Breast epithelium (tissue), 4 donors: ENCODE measurements at regions of chr3 and their contacts with region 1.

Region 1: GRCh38 chr3:162597226-162597625 is 1100.6 kb downstream of the OTOL1 start:
- DNase-seq: no peak
- H3K4me3 ChIP-seq: no peak overlapping the region
- H3K27ac ChIP-seq: no peak overlapping the region
- H3K4me1 ChIP-seq: no peaks in the 10 kb centered on the region
- H3K27me3 ChIP-seq: no peaks in the 10 kb centered on the region
- CTCF ChIP-seq: no peak
- POLR2A ChIP-seq: no peak

Region 2: DNA sequence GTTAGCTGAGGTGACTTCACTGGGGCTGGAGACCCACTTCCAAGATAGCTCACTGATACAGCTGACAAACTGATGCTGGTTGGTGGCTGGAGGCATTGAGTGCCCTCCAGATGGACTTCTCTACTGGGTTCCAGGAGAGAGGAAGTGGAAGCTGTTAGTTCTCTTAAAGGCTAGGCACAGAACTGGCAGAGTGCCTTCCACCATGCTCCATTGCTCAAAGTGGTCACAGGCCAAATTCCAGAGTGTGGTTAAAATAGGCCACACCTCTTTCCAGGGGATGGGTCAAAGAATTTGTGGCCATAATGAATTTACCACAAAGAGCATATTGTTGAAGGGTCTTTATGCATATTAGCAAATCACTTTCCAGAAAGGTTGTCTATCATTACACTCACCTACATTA is 1301.9 kb before region 1 on chr3:
- intact Hi-C with region 1: loop called (anchors 10 kb)
- DNase-seq: no peak
- H3K4me3 ChIP-seq: no peak overlapping the region
- H3K27ac ChIP-seq: no peak overlapping the region
- H3K4me1 ChIP-seq: no peaks in the 10 kb centered on the region
- H3K27me3 ChIP-seq: no peaks in the 10 kb centered on the region
- CTCF ChIP-seq: no peak
- POLR2A ChIP-seq: no peak